Dorsolateral prefrontal cortex (tissue), 120 donors: ENCODE measurements at regions of chr1 and their contacts with region 1.

Region 1: GRCh38 chr1:147599362-147600118 is 58.2 kb downstream of the BCL9 start:
- DNase-seq: peak; percentile 95 to 98 (median 97)
- H3K4me3 ChIP-seq: peak overlapping the region; percentile 52 to 97 (median 84)
- H3K27ac ChIP-seq: peak overlapping the region; percentile 63 to 96 (median 90)
- H3K27me3 ChIP-seq: no peaks in the 10 kb centered on the region
- CTCF ChIP-seq: peak in 2 of 56 donors; percentile 4 to 11

Region 2: GRCh38 chr1:147541672-147542568 is 57.6 kb before region 1 on chr1:
- intact Hi-C with region 1: loop called (anchors 1 kb)
- DNase-seq: peak; percentile 42 to 74 (median 60)
- H3K4me3 ChIP-seq: peak overlapping the region; percentile 54 to 88 (median 74)
- H3K27ac ChIP-seq: peak overlapping the region; percentile 68 to 97 (median 94)
- H3K27me3 ChIP-seq: no peaks in the 10 kb centered on the region
- CTCF ChIP-seq: peak in 2 of 56 donors; percentile 6